Tibial artery (tissue), 4 donors: ENCODE measurements at regions of chr1 and their contacts with region 1.

Region 1: DNA sequence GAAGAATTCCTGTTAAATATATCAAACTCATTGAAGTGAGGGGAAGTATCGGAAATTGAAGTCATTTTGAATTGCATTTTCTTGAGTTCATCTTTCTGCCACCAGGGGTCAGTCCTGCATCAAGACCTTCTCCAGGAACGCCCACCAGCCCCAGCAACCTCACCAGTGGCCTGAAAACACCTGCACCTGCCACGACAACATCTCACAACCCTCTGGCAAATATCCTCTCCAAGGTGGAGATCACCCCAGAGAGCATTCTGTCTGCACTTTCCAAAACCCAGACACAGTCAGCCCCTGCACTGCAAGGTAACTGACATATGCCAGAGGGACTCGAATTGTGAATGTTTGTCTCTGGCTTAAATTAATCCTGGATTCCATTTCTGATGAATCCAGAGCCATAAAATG is 22.8 kb upstream of the TARS2 start:
- DNase-seq: peak in 1 of 2 donors; percentile 33
- H3K4me3 ChIP-seq: no peak overlapping the region
- H3K27ac ChIP-seq: no peak overlapping the region
- H3K4me1 ChIP-seq: peaks cover 0 to 6% (median 1%) of the 10 kb centered on the region in 4 donors
- H3K27me3 ChIP-seq: no peaks in the 10 kb centered on the region
- CTCF ChIP-seq: peak; percentile 79 to 81

Region 2: DNA sequence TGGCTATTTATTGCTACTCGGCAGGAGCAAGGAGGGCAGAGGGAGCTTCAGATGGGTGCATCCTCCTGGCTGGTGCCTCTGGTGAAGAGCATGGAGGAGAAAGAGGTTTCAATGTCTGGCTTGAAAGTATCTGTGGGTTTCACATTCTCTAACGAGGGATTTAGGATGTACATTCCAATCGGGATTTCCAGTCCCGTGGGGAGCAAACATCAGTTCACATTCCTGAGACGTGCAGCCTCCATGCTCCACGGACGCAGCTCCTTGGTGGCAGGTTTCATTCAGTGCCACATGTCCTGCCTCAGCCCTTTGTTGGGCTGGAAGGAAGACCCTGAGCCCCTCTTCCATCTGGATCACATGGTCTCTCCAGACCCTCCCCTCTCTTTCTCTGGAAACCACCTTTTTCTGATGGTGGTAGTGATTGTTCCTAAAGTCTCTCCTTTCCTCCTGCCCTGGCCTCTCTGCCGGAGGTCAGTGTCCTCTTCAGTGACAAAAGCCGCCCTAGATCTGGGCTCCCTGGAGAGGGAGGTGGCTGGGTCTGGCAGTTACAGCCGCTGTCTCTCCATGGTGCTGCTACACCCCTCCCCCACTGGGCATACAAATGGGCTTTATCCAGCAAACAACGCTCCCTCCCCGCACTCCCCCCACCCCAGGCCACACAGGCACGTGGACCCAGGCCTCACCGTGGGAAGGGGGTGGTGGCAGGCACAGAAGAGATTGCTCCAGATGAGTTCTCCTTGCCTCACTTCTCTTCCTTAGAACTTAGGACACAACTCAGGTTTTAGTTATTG is 207.7 kb before region 1 on chr1:
- intact Hi-C with region 1: no loop called
- DNase-seq: no peak
- H3K4me3 ChIP-seq: no peak overlapping the region
- H3K27ac ChIP-seq: no peak overlapping the region
- H3K4me1 ChIP-seq: peaks cover 0 to 18% (median 13%) of the 10 kb centered on the region in 4 donors
- H3K27me3 ChIP-seq: peaks cover 0 to 30% of the 10 kb centered on the region in 2 donors
- CTCF ChIP-seq: no peak

Region 3: GRCh38 chr1:150321826-150322166 is 142.6 kb before region 1 on chr1:
- intact Hi-C with region 1: no loop called
- DNase-seq: no peak
- H3K4me3 ChIP-seq: peak overlapping the region; percentile 79 to 94
- H3K27ac ChIP-seq: peak overlapping the region; percentile 85 to 88
- H3K4me1 ChIP-seq: peaks cover 0 to 25% (median 13%) of the 10 kb centered on the region in 4 donors
- H3K27me3 ChIP-seq: no peaks in the 10 kb centered on the region
- CTCF ChIP-seq: no peak

Region 4: GRCh38 chr1:150387200-150387599 is 77.2 kb before region 1 on chr1:
- intact Hi-C with region 1: no loop called
- DNase-seq: no peak
- H3K4me3 ChIP-seq: no peak overlapping the region
- H3K27ac ChIP-seq: no peak overlapping the region
- H3K4me1 ChIP-seq: peaks cover 0 to 28% (median 5%) of the 10 kb centered on the region in 4 donors
- H3K27me3 ChIP-seq: no peaks in the 10 kb centered on the region
- CTCF ChIP-seq: no peak

Region 5: DNA sequence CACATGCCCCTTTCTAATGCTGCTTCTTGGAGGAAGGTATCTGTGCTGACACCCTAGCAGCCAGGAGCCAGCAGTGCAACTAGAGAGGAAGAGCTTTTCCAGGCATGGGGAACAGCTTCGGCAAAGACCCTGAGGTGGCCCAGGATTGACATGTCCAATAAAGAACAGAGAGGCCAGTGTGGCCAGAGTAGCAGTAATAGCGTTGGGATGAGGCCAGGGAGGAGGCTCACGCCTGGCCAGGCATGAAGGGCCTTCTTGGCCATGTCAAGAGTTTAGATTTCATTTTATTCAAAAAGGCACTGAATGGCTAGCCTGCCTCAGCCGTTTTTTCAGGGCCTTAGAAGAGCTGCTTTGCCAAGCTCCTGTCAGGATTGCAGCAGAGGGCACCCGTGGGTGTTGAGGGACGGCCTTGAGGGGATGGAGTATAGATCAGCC is 68.5 kb after region 1 on chr1:
- intact Hi-C with region 1: loop called (anchors 5 kb)
- DNase-seq: no peak
- H3K4me3 ChIP-seq: no peak overlapping the region
- H3K27ac ChIP-seq: peak overlapping the region; percentile 30 to 75
- H3K4me1 ChIP-seq: peaks cover 0 to 63% (median 28%) of the 10 kb centered on the region in 4 donors
- H3K27me3 ChIP-seq: no peaks in the 10 kb centered on the region
- CTCF ChIP-seq: no peak